Activated naive CD4-positive, alpha-beta T cell treated with anti-CD3 and anti-CD28 coated beads for 36 hours (primary cell): ENCODE measurements at regions of chr11 and their contacts with region 1.

Region 1: GRCh38 chr11:90216611-90217010 is 6.2 kb downstream of the CHORDC1 start:
- DNase-seq: no peak
- H3K4me3 Mint-ChIP-seq: no peak overlapping the region
- H3K27ac Mint-ChIP-seq: peak overlapping the region; percentile 3
- H3K4me1 Mint-ChIP-seq: peaks cover 59% of the 10 kb centered on the region
- H3K27me3 Mint-ChIP-seq: no peaks in the 10 kb centered on the region

Region 2: GRCh38 chr11:90187839-90188238 is 28.8 kb before region 1 on chr11:
- CTCF ChIA-PET with region 1: no interaction called
- intact Hi-C with region 1: no loop called
- DNase-seq: no peak
- H3K4me3 Mint-ChIP-seq: no peak overlapping the region
- H3K27ac Mint-ChIP-seq: no peak overlapping the region
- H3K4me1 Mint-ChIP-seq: no peaks in the 10 kb centered on the region
- H3K27me3 Mint-ChIP-seq: no peaks in the 10 kb centered on the region

Region 3: DNA sequence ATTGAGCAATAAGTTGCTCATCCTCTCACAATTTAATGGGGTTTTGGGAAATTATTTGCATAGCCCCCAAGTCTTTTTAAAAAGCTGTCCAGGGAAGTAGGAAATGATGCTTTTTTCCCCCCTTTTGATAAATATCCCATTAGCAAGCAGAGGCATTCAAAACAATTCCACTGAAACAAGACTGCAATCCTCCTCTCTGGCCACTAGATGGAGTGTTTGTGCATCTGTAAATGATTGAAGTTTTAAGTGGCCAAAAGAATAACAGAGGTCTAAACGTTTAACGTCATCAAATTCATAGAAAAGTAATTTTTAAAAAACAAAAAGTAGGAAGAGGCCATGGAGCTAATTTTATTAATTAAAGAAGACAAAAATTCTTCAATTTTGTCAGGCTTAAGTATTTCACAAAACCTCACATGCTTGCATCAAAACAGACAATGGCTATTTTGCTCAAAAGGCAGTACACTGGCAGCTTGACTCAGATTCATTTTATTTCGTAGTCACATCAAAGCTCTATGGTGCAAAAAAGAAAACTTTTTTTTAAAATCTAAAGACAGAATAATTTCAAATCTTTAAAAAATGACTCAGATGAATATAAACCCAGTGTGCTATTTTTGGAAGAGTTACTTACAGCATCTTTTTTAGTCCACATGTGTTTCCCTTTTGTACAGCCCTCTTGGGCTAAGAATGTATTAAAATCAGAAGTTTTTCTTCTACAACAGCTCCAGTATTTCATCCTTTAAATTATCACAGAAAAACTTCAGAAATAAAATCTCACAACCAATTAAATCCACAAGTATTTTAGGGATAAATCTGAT is 11.6 kb before region 1 on chr11:
- CTCF ChIA-PET with region 1: interaction called, 17 read pairs
- intact Hi-C with region 1: loop called (anchors 1 kb)
- DNase-seq: peak; percentile 14
- H3K4me3 Mint-ChIP-seq: no peak overlapping the region
- H3K27ac Mint-ChIP-seq: peak overlapping the region; percentile 7
- H3K4me1 Mint-ChIP-seq: peaks cover 20% of the 10 kb centered on the region
- H3K27me3 Mint-ChIP-seq: no peaks in the 10 kb centered on the region